Posterior cingulate gyrus (tissue), 11 donors: ENCODE measurements at regions of chr6 and their contacts with region 1.

Region 1: DNA sequence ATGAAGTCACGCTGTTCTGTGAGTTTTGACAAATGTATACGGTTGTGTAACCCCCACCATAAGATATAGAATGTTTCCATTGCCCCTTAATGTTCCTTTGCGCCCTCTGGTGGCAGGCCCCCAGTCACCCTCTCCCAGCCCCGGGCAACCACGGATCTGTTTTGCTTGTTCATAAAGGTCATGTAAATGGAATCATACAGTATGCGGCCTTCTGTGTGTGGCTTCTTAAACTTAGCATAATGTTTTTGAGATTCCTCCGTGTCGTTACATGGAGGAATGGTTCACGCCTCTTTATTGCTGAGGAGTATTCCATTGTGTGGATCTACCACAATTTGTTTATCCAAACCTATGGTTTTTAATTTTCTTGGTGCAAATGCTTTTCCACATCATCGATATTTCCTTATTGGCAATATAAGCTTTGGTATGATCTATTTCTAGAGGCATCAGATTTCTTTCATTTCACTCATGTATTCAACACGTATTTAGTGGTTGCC is 28.4 kb downstream of the LYRM2 start:
- DNase-seq: peak in 2 of 10 donors; percentile 62 to 63

Region 2: GRCh38 chr6:89432875-89433251 is 177.3 kb before region 1 on chr6 and contains the start of gene ANKRD6:
- intact Hi-C with region 1: loop called (anchors 5 kb)
- DNase-seq: peak; percentile 28 to 95 (median 74)

Region 3: DNA sequence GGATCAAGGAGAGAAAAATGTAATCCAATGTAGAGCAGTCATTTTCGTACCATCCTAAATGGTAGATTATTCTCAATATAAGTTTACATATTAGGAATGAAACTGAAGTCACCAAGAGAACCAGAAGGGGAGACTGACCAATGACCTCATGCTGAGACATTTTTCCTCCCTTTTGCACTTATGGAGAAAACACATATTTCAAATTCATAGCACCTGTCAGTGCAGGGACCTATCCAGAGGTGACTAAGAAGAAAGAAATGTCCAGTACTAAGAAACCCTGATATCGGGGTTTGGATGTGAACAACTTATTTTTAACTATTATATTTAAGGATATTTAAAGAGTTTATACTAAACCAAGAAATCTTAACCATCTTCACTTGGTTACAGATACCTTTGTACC is 44.9 kb after region 1 on chr6:
- intact Hi-C with region 1: no loop called
- DNase-seq: no peak